Activated CD8-positive, alpha-beta T cell treated with anti-CD3 and anti-CD28 coated beads for 36 hours (primary cell): ENCODE measurements at regions of chr20 and their contacts with region 1.

Region 1: DNA sequence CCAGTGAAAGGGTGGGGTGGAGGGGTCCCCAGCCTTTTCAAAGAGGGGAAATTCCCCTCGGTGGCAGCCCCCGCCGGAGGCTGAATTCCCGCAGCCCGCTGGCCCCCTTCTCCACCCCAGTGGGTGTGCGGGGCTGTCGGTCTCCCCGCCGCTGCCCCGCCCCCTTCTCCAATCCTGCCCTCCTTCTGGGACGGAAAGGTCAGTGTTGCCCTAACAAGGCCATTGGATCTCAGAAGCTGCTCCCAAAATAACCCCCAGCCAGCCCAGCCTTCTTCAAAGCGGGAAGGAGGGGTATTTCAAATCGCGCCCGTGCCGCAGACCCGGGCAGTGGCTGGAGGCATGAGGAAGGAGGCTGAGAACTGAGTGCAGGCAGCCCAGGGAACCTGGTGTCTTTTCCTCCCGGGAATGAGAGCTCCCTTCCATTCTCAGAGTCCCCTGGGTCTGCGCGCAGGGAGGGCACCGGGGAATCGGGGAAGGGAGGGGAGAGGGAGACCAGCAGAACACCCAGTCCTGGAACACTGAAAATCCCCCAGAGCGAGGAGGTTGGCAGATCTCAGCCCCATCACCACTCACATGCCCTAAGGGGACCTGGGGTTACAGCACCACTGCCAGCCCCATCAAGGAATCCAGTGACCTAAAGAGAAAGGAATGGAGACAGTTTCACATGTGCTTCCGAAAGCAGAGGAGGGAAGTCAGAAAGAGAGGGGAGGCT is at the start of gene JPH2:
- DNase-seq: no peak
- ATAC-seq: no peak
- H3K4me3 Mint-ChIP-seq: peak within 1 kb of the TSS; percentile 30
- H3K27ac Mint-ChIP-seq: no peak within 1 kb of the TSS
- H3K4me1 Mint-ChIP-seq: peaks cover 11% of the 10 kb centered on the region
- H3K27me3 Mint-ChIP-seq: peaks cover 50% of the 10 kb centered on the region
- CTCF ChIP-seq: no peak
- total RNA-seq, gene JPH2: 0.47 to 0.54 TPM

Region 2: DNA sequence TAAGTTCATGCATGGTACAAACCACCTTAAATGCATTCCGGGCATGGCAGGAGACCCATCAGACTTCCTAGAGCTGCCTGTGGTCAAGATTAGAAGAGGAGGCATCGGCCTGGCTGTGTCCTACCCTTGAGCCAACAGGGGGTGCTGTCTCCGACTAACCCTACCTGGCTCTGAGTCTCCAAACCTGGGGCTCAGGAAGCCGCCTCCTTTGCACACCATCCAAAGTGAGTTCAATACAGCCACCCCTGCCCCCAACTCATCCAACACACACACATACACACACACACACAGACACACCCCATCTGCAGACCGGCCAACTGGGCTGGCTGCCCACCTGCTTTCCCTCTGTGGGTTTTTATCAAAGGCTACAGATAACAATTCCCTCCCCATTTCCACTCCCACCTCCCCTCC is 77.3 kb before region 1 on chr20:
- CTCF ChIA-PET with region 1: interaction called, 215 read pairs
- POLR2A ChIA-PET with region 1: no interaction called
- intact Hi-C with region 1: loop called (anchors 5 kb)
- DNase-seq: no peak
- ATAC-seq: no peak
- H3K4me3 Mint-ChIP-seq: no peak overlapping the region
- H3K27ac Mint-ChIP-seq: no peak overlapping the region
- H3K4me1 Mint-ChIP-seq: no peaks in the 10 kb centered on the region
- H3K27me3 Mint-ChIP-seq: peaks cover 27% of the 10 kb centered on the region
- CTCF ChIP-seq: no peak

Region 3: GRCh38 chr20:44137210-44137801 is 49.9 kb before region 1 on chr20:
- CTCF ChIA-PET with region 1: interaction called, 11 read pairs
- POLR2A ChIA-PET with region 1: no interaction called
- intact Hi-C with region 1: no loop called
- DNase-seq: no peak
- ATAC-seq: no peak
- H3K4me3 Mint-ChIP-seq: no peak overlapping the region
- H3K27ac Mint-ChIP-seq: no peak overlapping the region
- H3K4me1 Mint-ChIP-seq: no peaks in the 10 kb centered on the region
- H3K27me3 Mint-ChIP-seq: peaks cover 8% of the 10 kb centered on the region
- CTCF ChIP-seq: no peak

Region 4: DNA sequence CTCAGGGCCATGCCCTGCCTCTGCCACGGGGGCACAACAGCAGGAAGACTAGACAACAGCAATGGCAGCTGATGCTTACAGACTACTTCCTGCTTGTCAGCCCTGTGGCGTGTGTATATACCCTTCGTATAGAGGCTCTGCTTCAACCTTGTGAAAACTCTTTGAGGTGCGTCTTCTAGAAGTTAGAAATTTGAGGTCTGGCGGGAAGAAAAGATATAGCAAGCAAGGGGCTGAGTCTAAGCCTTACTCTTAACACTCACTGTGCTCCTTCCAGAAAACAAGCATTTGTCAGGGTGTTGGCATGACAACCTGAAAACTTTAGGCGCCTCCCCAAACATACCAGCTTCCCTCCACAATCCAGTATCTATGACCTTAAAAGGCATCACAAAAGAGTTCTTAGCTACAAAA is 33.6 kb before region 1 on chr20:
- CTCF ChIA-PET with region 1: interaction called, 12 read pairs
- POLR2A ChIA-PET with region 1: no interaction called
- intact Hi-C with region 1: no loop called
- DNase-seq: peak; percentile 8
- ATAC-seq: peak; percentile 64
- H3K4me3 Mint-ChIP-seq: no peak overlapping the region
- H3K27ac Mint-ChIP-seq: peak overlapping the region; percentile 35
- H3K4me1 Mint-ChIP-seq: peaks cover 12% of the 10 kb centered on the region
- H3K27me3 Mint-ChIP-seq: peaks cover 3% of the 10 kb centered on the region
- CTCF ChIP-seq: no peak

Region 5: DNA sequence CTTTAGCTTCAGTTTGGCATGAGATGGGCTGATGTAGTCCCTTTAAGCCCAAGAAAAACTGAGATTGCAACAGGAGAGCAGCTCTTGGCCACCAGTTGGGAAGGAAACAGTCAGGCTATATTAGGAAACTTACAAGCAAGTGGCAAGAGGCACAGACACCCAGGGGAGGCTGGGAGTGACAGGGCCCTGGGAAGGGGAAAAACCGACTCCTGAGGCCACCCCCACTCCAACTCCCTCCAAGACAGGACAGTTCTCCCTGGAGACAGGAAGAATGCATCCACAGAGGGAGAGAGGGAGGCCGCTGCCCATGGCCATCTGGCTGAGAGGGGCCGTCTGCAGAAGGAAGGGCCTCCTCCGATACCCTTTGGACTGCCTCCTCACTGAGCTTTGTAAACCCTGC is 20.7 kb before region 1 on chr20:
- CTCF ChIA-PET with region 1: interaction called, 17 read pairs
- POLR2A ChIA-PET with region 1: no interaction called
- intact Hi-C with region 1: no loop called
- DNase-seq: no peak
- ATAC-seq: no peak
- H3K4me3 Mint-ChIP-seq: no peak overlapping the region
- H3K27ac Mint-ChIP-seq: no peak overlapping the region
- H3K4me1 Mint-ChIP-seq: no peaks in the 10 kb centered on the region
- H3K27me3 Mint-ChIP-seq: peaks cover 32% of the 10 kb centered on the region
- CTCF ChIP-seq: no peak

Region 6: GRCh38 chr20:44203161-44203560 is 16.0 kb after region 1 on chr20:
- CTCF ChIA-PET with region 1: interaction called, 11 read pairs
- POLR2A ChIA-PET with region 1: interaction called, 5 read pairs
- intact Hi-C with region 1: no loop called
- DNase-seq: no peak
- ATAC-seq: no peak
- H3K4me3 Mint-ChIP-seq: no peak overlapping the region
- H3K27ac Mint-ChIP-seq: no peak overlapping the region
- H3K4me1 Mint-ChIP-seq: peaks cover 50% of the 10 kb centered on the region
- H3K27me3 Mint-ChIP-seq: no peaks in the 10 kb centered on the region
- CTCF ChIP-seq: no peak

Region 7: DNA sequence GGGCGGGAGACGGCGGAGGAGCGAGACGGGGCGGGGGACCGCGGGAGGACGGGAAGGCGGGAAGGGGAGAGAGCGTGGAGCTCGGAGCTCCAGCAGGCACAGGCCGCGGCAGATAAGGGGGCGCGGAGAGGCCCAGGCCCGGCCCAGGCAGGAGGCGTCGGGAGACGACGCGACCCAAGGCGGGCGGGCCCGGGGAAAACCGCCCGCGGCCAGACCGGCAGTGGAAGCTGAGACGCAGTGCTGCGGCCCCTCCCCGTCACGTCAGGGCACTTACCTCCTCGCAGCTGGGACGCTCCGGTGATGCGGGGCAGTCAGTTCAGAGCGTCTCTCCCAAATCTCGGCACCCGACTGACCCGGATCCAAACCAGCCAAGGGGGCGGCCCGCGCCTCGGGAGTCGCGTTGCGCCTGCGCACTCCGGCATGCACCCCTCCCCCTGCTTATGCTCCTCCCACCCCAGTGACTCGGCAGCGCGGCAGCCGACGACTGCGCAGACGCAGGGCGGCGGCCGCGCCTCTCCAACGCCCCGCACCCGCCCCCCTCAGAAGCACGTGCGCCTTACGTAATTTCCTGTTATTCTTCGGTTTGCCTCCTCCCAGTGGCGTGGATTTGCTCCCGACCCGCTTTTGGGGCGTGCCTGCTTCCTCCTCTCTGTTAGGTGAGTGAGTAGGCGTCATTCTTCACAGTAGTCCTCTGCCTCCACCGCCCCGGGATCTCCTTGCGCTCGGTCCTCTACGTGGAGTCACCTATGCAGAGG is 23.4 kb after region 1 on chr20 and contains the start of gene OSER1:
- CTCF ChIA-PET with region 1: interaction called, 11 read pairs
- POLR2A ChIA-PET with region 1: no interaction called
- intact Hi-C with region 1: no loop called
- DNase-seq: peak; percentile 98
- ATAC-seq: peak; percentile 88
- H3K4me3 Mint-ChIP-seq: peak within 1 kb of the TSS; percentile 92
- H3K27ac Mint-ChIP-seq: peak within 1 kb of the TSS; percentile 92
- H3K4me1 Mint-ChIP-seq: peaks cover 46% of the 10 kb centered on the region
- H3K27me3 Mint-ChIP-seq: no peaks in the 10 kb centered on the region
- CTCF ChIP-seq: no peak
- total RNA-seq, gene OSER1: 20.9 to 23.3 TPM

Region 8: DNA sequence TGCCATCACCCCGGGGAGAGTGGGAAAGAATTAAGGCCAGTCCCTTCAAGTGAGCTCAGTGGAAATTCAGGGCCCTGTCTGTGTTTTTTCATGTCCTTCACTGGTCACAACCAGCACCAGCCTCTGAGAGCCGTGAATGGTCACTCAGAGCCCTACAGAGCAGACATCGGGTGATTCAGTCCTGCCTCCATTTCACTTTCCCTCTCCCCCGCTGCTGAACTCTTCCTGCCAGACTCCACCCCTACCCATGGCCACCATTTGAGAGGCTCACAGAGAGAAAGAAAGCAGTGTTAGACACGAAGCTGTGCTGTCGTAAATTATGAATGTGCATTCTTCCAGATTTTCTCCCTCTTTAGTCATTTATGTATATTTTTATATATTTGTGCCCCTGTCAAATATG is 155.0 kb after region 1 on chr20:
- CTCF ChIA-PET with region 1: no interaction called
- POLR2A ChIA-PET with region 1: no interaction called
- intact Hi-C with region 1: no loop called
- DNase-seq: no peak
- ATAC-seq: no peak
- H3K4me3 Mint-ChIP-seq: no peak overlapping the region
- H3K27ac Mint-ChIP-seq: no peak overlapping the region
- H3K4me1 Mint-ChIP-seq: no peaks in the 10 kb centered on the region
- H3K27me3 Mint-ChIP-seq: no peaks in the 10 kb centered on the region
- CTCF ChIP-seq: no peak